Endothelial cell of umbilical vein (primary cell): ENCODE measurements at regions of chr7 and their contacts with region 1.

Region 1: GRCh38 chr7:44348300-44348699 is 22.9 kb upstream of the CAMK2B start:
- DNase-seq: peak; percentile 67
- H3K4me3 ChIP-seq: no peak overlapping the region
- H3K27ac ChIP-seq: no peak overlapping the region
- H3K4me1 ChIP-seq: no peaks in the 10 kb centered on the region
- H3K27me3 ChIP-seq: peaks cover 9 to 23% of the 10 kb centered on the region in 2 experiments
- CTCF ChIP-seq: peak; percentile 57 to 82
- POLR2A ChIP-seq: no peak

Region 2: DNA sequence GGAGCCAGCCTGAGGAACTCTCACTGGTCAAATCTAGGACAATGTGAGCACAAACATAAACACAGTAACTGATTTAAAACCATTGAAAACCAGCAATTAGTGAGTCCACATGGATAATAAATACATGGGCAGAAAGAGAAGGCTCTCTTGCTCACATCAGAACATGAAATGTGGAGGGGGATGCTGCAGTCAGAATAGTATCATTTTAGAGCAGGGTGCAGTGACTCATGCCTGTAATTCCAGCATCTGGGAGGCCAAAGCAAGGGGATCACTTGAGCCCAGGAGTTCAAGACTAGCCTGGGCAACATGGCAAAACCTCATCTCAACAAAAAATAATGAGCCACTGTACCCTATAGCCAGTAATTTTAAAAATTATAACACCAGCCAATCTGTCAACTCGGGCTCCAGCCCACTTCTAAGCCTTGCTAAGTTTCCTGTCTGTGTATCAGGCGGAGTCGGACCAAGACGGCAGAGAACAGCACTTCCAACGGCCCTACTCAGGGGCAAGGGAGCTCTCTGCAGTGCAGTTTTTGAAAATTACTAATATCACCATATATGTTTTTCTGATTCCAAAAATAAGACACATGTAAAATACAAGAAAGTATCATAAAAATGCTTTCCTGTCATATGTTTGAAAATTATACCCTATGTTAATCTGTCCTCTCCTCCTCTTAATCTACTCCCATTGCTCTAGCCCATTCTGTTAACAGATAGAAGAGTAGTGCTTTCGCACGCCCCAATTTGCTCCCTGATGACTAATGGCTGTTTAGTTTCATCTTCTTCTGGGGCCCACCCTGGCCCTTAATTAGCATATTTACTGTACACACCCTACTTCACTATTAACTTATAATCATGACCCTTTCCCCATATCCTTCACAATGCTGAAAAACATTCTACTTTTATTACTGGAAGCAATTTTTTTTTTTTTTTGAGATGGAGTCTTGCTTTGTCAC is 459.0 kb before region 1 on chr7:
- CTCF ChIA-PET with region 1: no interaction called
- POLR2A ChIA-PET with region 1: no interaction called
- dilution Hi-C with region 1: no loop called
- intact Hi-C with region 1: no loop called
- DNase-seq: no peak
- H3K4me3 ChIP-seq: no peak overlapping the region
- H3K27ac ChIP-seq: no peak overlapping the region
- H3K4me1 ChIP-seq: peaks cover 6% of the 10 kb centered on the region
- H3K27me3 ChIP-seq: no peaks in the 10 kb centered on the region
- CTCF ChIP-seq: no peak
- POLR2A ChIP-seq: no peak

Region 3: GRCh38 chr7:44240983-44241510 is 107.3 kb before region 1 on chr7:
- CTCF ChIA-PET with region 1: interaction called, 22 read pairs
- POLR2A ChIA-PET with region 1: no interaction called
- dilution Hi-C with region 1: no loop called
- intact Hi-C with region 1: no loop called
- DNase-seq: peak; percentile 63
- H3K4me3 ChIP-seq: no peak overlapping the region
- H3K27ac ChIP-seq: no peak overlapping the region
- H3K4me1 ChIP-seq: no peaks in the 10 kb centered on the region
- H3K27me3 ChIP-seq: no peaks in the 10 kb centered on the region
- CTCF ChIP-seq: peak; percentile 71 to 76
- POLR2A ChIP-seq: no peak

Region 4: GRCh38 chr7:44275957-44276410 is 72.3 kb before region 1 on chr7:
- CTCF ChIA-PET with region 1: no interaction called
- POLR2A ChIA-PET with region 1: no interaction called
- dilution Hi-C with region 1: no loop called
- intact Hi-C with region 1: no loop called
- DNase-seq: peak; percentile 13
- H3K4me3 ChIP-seq: no peak overlapping the region
- H3K27ac ChIP-seq: no peak overlapping the region
- H3K4me1 ChIP-seq: no peaks in the 10 kb centered on the region
- H3K27me3 ChIP-seq: no peaks in the 10 kb centered on the region
- CTCF ChIP-seq: no peak
- POLR2A ChIP-seq: no peak

Region 5: DNA sequence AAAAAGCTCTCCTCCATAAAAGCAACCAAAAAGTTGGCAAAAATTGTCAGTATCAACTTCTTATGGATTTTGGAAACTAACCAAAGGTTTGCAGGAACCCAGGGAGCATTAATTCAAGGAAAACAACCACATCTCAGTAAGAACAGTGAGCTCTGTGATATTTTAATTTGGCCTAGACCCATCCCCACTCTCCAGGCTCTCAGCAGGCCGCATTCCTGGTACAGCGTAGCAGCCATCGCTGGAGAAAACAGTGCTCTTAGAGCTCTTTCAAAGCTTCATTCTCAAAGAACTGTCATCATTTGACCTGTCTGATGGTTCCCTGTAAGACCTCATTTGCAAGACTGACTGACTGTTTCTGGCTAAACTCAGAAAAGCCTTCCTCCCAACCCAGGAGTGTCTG is 60.3 kb after region 1 on chr7:
- CTCF ChIA-PET with region 1: interaction called, 11 read pairs
- POLR2A ChIA-PET with region 1: no interaction called
- dilution Hi-C with region 1: no loop called
- intact Hi-C with region 1: no loop called
- DNase-seq: no peak
- H3K4me3 ChIP-seq: no peak overlapping the region
- H3K27ac ChIP-seq: no peak overlapping the region
- H3K4me1 ChIP-seq: peaks cover 19% of the 10 kb centered on the region
- H3K27me3 ChIP-seq: no peaks in the 10 kb centered on the region
- CTCF ChIP-seq: no peak
- POLR2A ChIP-seq: no peak

Region 6: DNA sequence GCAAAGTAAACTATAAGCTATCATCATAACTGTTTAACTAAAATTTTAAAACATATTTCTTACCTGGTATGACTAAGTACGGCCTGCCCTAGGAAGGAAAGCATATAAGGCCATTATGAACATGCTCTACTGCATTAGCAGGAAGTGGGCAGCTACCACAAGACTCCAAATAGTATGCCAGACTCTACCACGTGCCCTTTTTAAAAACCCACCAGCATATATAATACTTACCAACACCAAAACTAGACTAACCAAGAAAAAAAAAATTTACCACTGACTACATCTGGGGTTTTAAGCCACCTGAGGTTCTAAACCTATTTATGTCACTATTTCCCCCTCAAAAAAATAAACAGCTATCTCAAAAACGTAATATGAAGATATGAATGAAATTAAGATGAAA is 112.0 kb after region 1 on chr7:
- CTCF ChIA-PET with region 1: interaction called, 17 read pairs
- POLR2A ChIA-PET with region 1: no interaction called
- dilution Hi-C with region 1: no loop called
- intact Hi-C with region 1: no loop called
- DNase-seq: no peak
- H3K4me3 ChIP-seq: no peak overlapping the region
- H3K27ac ChIP-seq: no peak overlapping the region
- H3K4me1 ChIP-seq: peaks cover 30% of the 10 kb centered on the region
- H3K27me3 ChIP-seq: no peaks in the 10 kb centered on the region
- CTCF ChIP-seq: no peak
- POLR2A ChIP-seq: no peak

Region 7: GRCh38 chr7:44477063-44477830 is 128.9 kb after region 1 on chr7:
- CTCF ChIA-PET with region 1: interaction called, 40 read pairs
- POLR2A ChIA-PET with region 1: interaction called, 4 read pairs
- dilution Hi-C with region 1: no loop called
- intact Hi-C with region 1: loop called (anchors 1 kb)
- DNase-seq: peak; percentile 73
- H3K4me3 ChIP-seq: no peak overlapping the region
- H3K27ac ChIP-seq: peak overlapping the region; percentile 31
- H3K4me1 ChIP-seq: peaks cover 29% of the 10 kb centered on the region
- H3K27me3 ChIP-seq: no peaks in the 10 kb centered on the region
- CTCF ChIP-seq: peak; percentile 95 to 99
- POLR2A ChIP-seq: no peak

Region 8: DNA sequence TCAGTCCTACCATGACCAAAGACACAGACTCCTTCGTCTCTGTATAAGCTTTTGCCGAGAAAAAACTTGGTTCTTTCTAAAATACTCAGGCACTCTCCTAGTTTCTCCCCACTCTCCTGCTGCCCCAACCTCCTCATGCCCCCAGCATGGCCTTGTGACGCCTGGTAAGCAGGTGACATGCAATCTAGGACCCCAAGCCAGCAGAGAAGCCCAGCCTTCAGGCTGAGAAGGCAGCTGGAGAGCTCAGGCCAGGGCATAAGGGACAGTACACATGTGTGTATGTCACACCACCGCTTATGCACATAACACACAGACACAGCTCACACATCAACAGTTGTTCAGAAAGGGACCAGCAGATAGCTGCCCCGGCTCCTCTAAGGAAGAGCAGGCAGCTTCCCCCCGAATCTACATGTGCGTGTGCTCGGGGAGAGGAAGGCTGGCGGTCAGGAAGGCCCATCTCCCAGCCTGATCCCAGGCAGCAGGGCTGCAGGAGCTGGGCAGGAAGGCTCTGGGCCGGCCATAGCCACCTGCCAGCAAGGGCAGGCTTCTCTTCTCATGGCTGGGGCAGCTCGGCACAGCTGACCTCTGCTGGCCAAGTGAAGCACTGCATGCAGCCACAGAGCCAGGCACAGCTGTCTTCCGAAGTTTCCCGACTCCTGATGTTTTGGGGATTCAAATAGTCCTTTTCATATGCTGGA is 216.9 kb after region 1 on chr7:
- CTCF ChIA-PET with region 1: interaction called, 145 read pairs
- POLR2A ChIA-PET with region 1: interaction called, 5 read pairs
- dilution Hi-C with region 1: no loop called
- intact Hi-C with region 1: loop called (anchors 1 kb)
- DNase-seq: peak; percentile 62
- H3K4me3 ChIP-seq: no peak overlapping the region
- H3K27ac ChIP-seq: no peak overlapping the region
- H3K4me1 ChIP-seq: no peaks in the 10 kb centered on the region
- H3K27me3 ChIP-seq: no peaks in the 10 kb centered on the region
- CTCF ChIP-seq: peak; percentile 94 to 98
- POLR2A ChIP-seq: no peak